ENCODE measurements at regions of chr11 and their contacts with region 1.

Region 1: DNA sequence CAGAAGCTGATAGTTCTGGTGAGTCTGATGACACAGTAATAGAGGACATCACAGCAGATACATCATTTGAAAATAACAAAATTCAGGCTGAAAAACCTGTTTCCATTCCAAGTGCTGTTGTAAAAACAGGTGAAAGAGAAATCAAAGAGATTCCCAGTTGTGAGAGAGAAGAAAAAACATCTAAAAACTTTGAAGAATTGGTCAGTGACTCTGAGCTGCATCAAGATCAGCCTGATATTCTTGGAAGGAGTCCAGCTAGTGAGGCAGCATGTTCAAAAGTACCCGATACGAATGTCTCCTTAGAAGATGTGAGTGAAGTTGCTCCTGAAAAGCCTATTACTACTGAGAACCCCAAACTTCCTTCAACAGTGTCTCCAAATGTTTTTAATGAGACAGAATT is 38.7 kb downstream of the RTN3 start:
- DNase-seq: no peak
- ATAC-seq: no peak
- H3K4me3 ChIP-seq: no peak overlapping the region
- H3K27ac ChIP-seq: no peak overlapping the region
- H3K4me1 ChIP-seq: peaks cover 0 to 3% of the 10 kb centered on the region in 2 donors
- H3K27me3 ChIP-seq: no peaks in the 10 kb centered on the region

Region 2: GRCh38 chr11:63227521-63228107 is 492.4 kb before region 1 on chr11:
- intact Hi-C with region 1: no loop called
- DNase-seq: no peak
- ATAC-seq: no peak
- H3K4me3 ChIP-seq: no peak overlapping the region
- H3K27ac ChIP-seq: no peak overlapping the region
- H3K4me1 ChIP-seq: no peaks in the 10 kb centered on the region
- H3K27me3 ChIP-seq: no peaks in the 10 kb centered on the region

Region 3: DNA sequence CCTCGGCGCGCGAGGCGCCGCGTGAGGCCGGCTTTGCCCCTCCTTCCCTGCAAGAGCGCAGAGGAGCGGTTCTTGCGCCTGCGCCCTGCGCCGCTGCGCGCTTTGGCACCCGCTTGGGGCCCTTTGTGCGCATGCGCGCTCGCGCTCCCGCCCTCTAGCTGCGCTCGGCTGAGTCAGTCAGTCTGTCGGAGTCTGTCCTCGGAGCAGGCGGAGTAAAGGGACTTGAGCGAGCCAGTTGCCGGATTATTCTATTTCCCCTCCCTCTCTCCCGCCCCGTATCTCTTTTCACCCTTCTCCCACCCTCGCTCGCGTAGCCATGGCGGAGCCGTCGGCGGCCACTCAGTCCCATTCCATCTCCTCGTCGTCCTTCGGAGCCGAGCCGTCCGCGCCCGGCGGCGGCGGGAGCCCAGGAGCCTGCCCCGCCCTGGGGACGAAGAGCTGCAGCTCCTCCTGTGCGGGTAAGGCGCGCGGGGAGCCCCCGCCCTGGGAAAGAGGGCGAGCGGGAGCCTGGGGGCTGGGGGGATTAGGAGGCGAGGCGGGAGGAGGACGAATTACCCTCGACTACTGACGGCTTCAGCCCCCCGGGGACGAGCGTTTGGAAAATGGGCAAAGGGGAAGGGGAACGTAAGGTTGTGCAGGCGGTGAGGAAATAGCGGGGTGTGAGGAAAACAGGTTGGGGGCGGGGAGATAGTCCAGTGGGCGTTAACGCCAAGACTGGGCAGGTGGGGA is 38.5 kb before region 1 on chr11 and contains the start of gene RTN3:
- intact Hi-C with region 1: loop called in 1 of 2 experiments (anchors 5 kb)
- DNase-seq: peak; percentile 98 to 99
- ATAC-seq: peak; percentile 98
- H3K4me3 ChIP-seq: peak within 1 kb of the TSS; percentile 61 to 92
- H3K27ac ChIP-seq: peak within 1 kb of the TSS; percentile 40 to 71
- H3K4me1 ChIP-seq: no peaks in the 10 kb centered on the region
- H3K27me3 ChIP-seq: no peaks in the 10 kb centered on the region
- total RNA-seq, gene RTN3: 72.3 to 89.4 TPM

Measured in aorta (tissue), 5 donors.